ENCODE measurements at regions of chr12 and their contacts with region 1.

Region 1: DNA sequence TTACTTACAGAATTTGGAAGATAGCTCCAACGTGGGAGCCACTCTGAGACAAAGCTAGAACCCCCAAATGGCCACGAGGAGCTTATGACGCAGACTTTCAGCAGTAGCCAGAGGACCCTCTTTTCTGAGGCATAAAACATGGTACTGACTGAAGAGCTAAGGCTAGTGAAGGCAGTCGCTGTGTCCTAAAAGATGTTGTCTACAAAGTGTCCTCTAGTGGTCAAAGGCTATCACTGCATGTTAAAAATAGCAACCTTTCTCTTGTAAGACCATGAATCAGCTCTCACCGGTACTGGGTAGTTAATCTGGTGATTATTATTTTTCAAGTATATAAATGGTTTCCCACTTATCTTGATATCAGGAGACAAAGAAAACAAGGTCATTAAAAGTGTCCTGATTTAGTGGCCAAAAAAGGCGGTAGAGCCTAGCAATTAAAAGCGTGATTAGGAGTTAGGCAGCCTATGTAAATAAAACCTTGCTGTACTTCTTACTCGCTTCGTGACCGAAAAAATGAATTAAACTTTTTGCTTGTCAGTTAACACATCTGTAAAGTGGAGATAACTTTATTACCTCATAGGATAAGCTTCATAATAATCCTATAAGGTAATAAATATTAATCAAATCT is 47.0 kb upstream of the LGR5 start:
- DNase-seq: peak; percentile 12
- ATAC-seq: peak; percentile 93
- H3K4me3 ChIP-seq: no peak overlapping the region
- H3K27ac ChIP-seq: no peak overlapping the region
- H3K4me1 ChIP-seq: no peaks in the 10 kb centered on the region
- H3K27me3 ChIP-seq: no peaks in the 10 kb centered on the region
- CTCF ChIP-seq: peak; percentile 79 to 86 (median 84)
- EP300 ChIP-seq: no peak
- POLR2A ChIP-seq: no peak
- RAD21 ChIP-seq: peak; percentile 52

Region 2: DNA sequence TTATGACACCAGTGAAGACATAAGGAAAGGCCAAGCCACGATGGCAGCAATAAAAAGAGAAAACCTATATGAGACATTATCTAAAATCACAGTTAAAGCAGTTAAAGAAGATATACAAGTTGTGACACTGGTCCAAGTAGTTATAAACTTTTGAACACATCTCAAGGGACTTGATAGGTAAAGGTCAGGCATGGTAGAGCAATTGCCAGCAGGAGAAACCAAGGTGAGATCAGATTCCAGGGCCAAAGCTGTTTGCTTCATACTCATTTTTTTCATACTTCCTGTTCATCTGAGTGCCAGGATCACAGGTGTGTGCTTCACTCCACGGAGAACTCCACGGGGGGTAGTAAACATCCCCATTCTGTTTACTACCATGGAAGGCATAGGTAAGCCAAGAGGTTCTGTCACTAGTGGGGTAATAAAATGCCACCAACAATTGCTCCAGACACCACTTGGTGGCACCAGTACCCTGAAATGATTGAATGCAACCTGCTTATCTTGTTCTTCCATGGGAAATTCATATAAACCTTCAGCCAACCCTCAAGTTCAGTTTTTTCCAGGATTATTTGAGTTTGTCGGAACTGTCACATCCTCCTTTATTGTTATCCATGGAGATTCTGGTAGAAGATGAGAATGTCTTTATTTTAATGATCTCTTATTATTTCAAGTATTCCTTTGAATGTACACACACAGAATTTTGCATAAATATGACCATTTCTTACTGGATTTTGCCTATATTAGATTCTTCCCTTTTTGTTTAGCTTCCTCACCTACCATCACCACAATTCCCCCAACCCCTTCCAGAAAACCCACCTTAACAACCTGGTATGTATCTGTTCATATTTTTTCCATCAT is 175.7 kb before region 1 on chr12:
- CTCF ChIA-PET with region 1: interaction called, 3 read pairs
- POLR2A ChIA-PET with region 1: no interaction called
- RAD21 ChIA-PET with region 1: interaction called, 8 read pairs
- SMC1A ChIA-PET with region 1: no interaction called
- in situ Hi-C with region 1: no loop called
- intact Hi-C with region 1: loop called (anchors 2 kb)
- DNase-seq: no peak
- ATAC-seq: peak; percentile 69
- H3K4me3 ChIP-seq: no peak overlapping the region
- H3K27ac ChIP-seq: no peak overlapping the region
- H3K4me1 ChIP-seq: no peaks in the 10 kb centered on the region
- H3K27me3 ChIP-seq: no peaks in the 10 kb centered on the region
- CTCF ChIP-seq: peak; percentile 39 to 42 (median 41); a peak in 5 of 6 replicates
- EP300 ChIP-seq: no peak
- POLR2A ChIP-seq: no peak
- RAD21 ChIP-seq: peak; percentile 39; the same call in 1 of the 2 replicates

Region 3: GRCh38 chr12:71250166-71250565 is 142.5 kb before region 1 on chr12:
- CTCF ChIA-PET with region 1: no interaction called
- POLR2A ChIA-PET with region 1: no interaction called
- RAD21 ChIA-PET with region 1: no interaction called
- SMC1A ChIA-PET with region 1: no interaction called
- in situ Hi-C with region 1: no loop called
- intact Hi-C with region 1: no loop called
- DNase-seq: no peak
- ATAC-seq: no peak
- H3K4me3 ChIP-seq: no peak overlapping the region
- H3K27ac ChIP-seq: no peak overlapping the region
- H3K4me1 ChIP-seq: no peaks in the 10 kb centered on the region
- H3K27me3 ChIP-seq: no peaks in the 10 kb centered on the region
- CTCF ChIP-seq: no peak
- EP300 ChIP-seq: no peak
- POLR2A ChIP-seq: no peak
- RAD21 ChIP-seq: no peak

Region 4: GRCh38 chr12:72264548-72265175 is 872.0 kb after region 1 on chr12:
- CTCF ChIA-PET with region 1: no interaction called
- POLR2A ChIA-PET with region 1: no interaction called
- RAD21 ChIA-PET with region 1: no interaction called
- SMC1A ChIA-PET with region 1: no interaction called
- in situ Hi-C with region 1: no loop called
- intact Hi-C with region 1: no loop called
- DNase-seq: no peak
- ATAC-seq: peak; percentile 49; the same call in 1 of the 3 replicates
- H3K4me3 ChIP-seq: no peak overlapping the region
- H3K27ac ChIP-seq: no peak overlapping the region
- H3K4me1 ChIP-seq: no peaks in the 10 kb centered on the region
- H3K27me3 ChIP-seq: no peaks in the 10 kb centered on the region
- CTCF ChIP-seq: peak; percentile 11 to 28 (median 22); a peak in 3 of 6 replicates
- EP300 ChIP-seq: no peak
- POLR2A ChIP-seq: no peak
- RAD21 ChIP-seq: peak; percentile 42; the same call in 1 of the 2 replicates

Measured in GM12878 (cell line).